HCT116 (cell line): ENCODE measurements at regions of chr6 and their contacts with region 1.

Region 1: GRCh38 chr6:117449549-117450439 is 24.1 kb upstream of the ROS1 start:
- DNase-seq: peak; percentile 56
- ATAC-seq: peak; percentile 53; the same call in 1 of the 2 replicates
- H3K4me3 ChIP-seq: peak overlapping the region; percentile 30 to 49
- H3K27ac ChIP-seq: no peak overlapping the region
- H3K4me1 ChIP-seq: peaks cover 9 to 14% of the 10 kb centered on the region in 2 experiments
- H3K27me3 ChIP-seq: peaks cover 25% of the 10 kb centered on the region; the same call in 1 of the 2 replicates
- CTCF ChIP-seq: peak; percentile 52 to 87 (median 85); a peak in 5 of 6 replicates
- POLR2A ChIP-seq: no peak
- RAD21 ChIP-seq: peak; percentile 88

Region 2: GRCh38 chr6:117346142-117346930 is 103.5 kb before region 1 on chr6:
- CTCF ChIA-PET with region 1: no interaction called
- POLR2A ChIA-PET with region 1: no interaction called
- RAD21 ChIA-PET with region 1: no interaction called
- intact Hi-C with region 1: loop called (anchors 2 kb)
- DNase-seq: no peak
- ATAC-seq: 0 out of 2 replicates have a peak, but pooled peaks have one; percentile 36
- H3K4me3 ChIP-seq: no peak overlapping the region
- H3K27ac ChIP-seq: no peak overlapping the region
- H3K4me1 ChIP-seq: no peaks in the 10 kb centered on the region
- H3K27me3 ChIP-seq: no peaks in the 10 kb centered on the region
- CTCF ChIP-seq: peak; percentile 27 to 57 (median 53); a peak in 4 of 6 replicates
- POLR2A ChIP-seq: no peak
- RAD21 ChIP-seq: peak; percentile 71

Region 3: GRCh38 chr6:117482240-117483003 is 32.6 kb after region 1 on chr6 and contains the start of gene DCBLD1:
- CTCF ChIA-PET with region 1: interaction called, 6 read pairs
- POLR2A ChIA-PET with region 1: no interaction called
- RAD21 ChIA-PET with region 1: no interaction called
- intact Hi-C with region 1: loop called (anchors 2 kb)
- DNase-seq: peak; percentile 78
- ATAC-seq: peak; percentile 83
- H3K4me3 ChIP-seq: peak within 1 kb of the TSS; percentile 86 to 88
- H3K27ac ChIP-seq: peak within 1 kb of the TSS; percentile 88
- H3K4me1 ChIP-seq: peaks cover 11 to 21% of the 10 kb centered on the region in 2 experiments; a peak in 3 of 4 replicates
- H3K27me3 ChIP-seq: no peaks in the 10 kb centered on the region
- CTCF ChIP-seq: no peak
- POLR2A ChIP-seq: peak; percentile 59
- RAD21 ChIP-seq: no peak
- total RNA-seq, gene DCBLD1: 19.5 TPM

Region 4: DNA sequence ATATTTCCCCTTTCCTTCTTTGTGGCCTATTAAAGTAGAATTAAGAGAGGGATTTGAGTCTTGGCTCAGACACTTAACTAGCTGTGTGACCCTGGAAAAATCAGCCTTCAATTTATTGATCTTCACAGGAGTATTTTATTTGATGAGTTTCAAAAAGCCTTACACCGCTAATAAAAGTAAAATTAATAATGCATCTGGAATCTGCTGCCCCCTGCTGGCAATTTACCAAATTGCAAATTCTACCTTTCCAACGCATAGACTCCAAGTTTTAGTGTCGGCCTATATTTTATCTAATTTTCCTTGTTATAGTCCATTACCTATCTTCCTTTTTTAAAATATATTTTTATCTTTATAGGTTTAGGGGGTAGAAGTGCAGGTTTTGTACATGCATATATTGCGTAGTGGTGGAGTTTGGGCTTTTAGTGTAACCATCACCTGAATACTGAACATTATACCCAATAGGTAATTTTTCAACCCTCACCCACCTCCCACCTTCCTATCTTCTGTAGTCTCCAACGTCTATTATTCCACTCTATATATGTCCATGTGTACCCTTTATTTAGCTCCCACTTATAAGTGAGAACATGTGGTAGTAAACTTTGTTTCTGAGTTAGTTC is 106.2 kb after region 1 on chr6:
- CTCF ChIA-PET with region 1: interaction called, 21 read pairs
- POLR2A ChIA-PET with region 1: no interaction called
- RAD21 ChIA-PET with region 1: interaction called, 3 to 4 read pairs
- intact Hi-C with region 1: loop called (anchors 1 kb)
- DNase-seq: no peak
- ATAC-seq: peak; percentile 58
- H3K4me3 ChIP-seq: no peak overlapping the region
- H3K27ac ChIP-seq: no peak overlapping the region
- H3K4me1 ChIP-seq: peaks cover under 1 to 7% of the 10 kb centered on the region in 2 experiments; a peak in 2 of 4 replicates
- H3K27me3 ChIP-seq: no peaks in the 10 kb centered on the region
- CTCF ChIP-seq: peak; percentile 61 to 87 (median 77); a peak in 5 of 6 replicates
- POLR2A ChIP-seq: no peak
- RAD21 ChIP-seq: peak; percentile 83

Region 5: GRCh38 chr6:117602151-117602898 is 152.5 kb after region 1 on chr6 and contains the start of gene GOPC:
- CTCF ChIA-PET with region 1: interaction called, 41 read pairs
- POLR2A ChIA-PET with region 1: interaction called, 4 read pairs
- RAD21 ChIA-PET with region 1: interaction called in 1 of 2 experiments, 5 read pairs
- intact Hi-C with region 1: loop called (anchors 1 kb)
- DNase-seq: peak; percentile 95
- ATAC-seq: peak; percentile 90
- H3K4me3 ChIP-seq: peak within 1 kb of the TSS; percentile 88 to 89
- H3K27ac ChIP-seq: peak within 1 kb of the TSS; percentile 86
- H3K4me1 ChIP-seq: peaks cover 9 to 18% of the 10 kb centered on the region in 2 experiments
- H3K27me3 ChIP-seq: no peaks in the 10 kb centered on the region
- CTCF ChIP-seq: 0 out of 6 replicates have a peak, but pooled peaks of 1 of the 3 experiments have one; percentile 12
- POLR2A ChIP-seq: peak; percentile 77
- RAD21 ChIP-seq: no peak
- total RNA-seq, gene GOPC: 24.2 TPM

Region 6: DNA sequence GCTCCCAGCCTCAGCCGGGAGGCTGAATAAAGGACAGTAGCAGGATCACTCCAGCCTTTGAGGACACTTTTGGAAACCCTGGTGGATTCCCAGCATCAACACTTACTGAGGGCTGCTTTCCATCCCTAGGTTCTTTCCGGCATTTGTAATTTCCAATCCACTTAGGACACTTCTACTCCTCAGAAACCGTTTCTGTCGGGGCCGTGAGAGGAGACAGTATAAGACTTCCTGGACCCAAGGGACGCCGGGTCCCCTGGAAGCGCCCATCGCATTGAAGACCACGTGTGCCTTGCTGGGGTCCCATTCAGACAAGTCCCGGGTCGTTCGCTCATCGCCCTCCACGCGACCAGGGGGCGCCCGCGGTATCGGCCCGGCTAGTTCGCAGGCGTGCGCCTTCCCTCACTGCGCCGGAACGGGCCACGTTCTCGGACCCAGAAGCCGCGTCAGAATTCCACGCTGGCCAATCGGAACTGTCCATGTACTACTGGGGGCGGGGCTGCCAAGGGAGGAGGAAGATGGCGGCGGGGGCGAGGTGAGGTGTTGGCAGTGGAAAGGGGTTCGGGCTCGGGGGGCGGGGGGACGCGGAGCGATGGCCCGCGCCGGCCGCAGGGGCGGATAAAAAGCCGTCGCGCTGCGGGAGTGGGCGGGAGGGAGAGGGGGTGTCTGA is 225.3 kb after region 1 on chr6 and contains the start of gene NUS1:
- CTCF ChIA-PET with region 1: no interaction called
- POLR2A ChIA-PET with region 1: no interaction called
- RAD21 ChIA-PET with region 1: no interaction called
- intact Hi-C with region 1: loop called (anchors 5 kb)
- DNase-seq: peak; percentile 94
- ATAC-seq: peak; percentile 98
- H3K4me3 ChIP-seq: peak within 1 kb of the TSS; percentile 71 to 75
- H3K27ac ChIP-seq: peak within 1 kb of the TSS; percentile 30; the same call in 1 of the 2 replicates
- H3K4me1 ChIP-seq: peaks cover 7 to 22% of the 10 kb centered on the region in 2 experiments; a peak in 3 of 4 replicates
- H3K27me3 ChIP-seq: no peaks in the 10 kb centered on the region
- CTCF ChIP-seq: peak; percentile 57 to 65 (median 57); a peak in 5 of 6 replicates
- POLR2A ChIP-seq: no peak
- RAD21 ChIP-seq: no peak
- total RNA-seq, gene NUS1: 46.2 TPM

Region 7: DNA sequence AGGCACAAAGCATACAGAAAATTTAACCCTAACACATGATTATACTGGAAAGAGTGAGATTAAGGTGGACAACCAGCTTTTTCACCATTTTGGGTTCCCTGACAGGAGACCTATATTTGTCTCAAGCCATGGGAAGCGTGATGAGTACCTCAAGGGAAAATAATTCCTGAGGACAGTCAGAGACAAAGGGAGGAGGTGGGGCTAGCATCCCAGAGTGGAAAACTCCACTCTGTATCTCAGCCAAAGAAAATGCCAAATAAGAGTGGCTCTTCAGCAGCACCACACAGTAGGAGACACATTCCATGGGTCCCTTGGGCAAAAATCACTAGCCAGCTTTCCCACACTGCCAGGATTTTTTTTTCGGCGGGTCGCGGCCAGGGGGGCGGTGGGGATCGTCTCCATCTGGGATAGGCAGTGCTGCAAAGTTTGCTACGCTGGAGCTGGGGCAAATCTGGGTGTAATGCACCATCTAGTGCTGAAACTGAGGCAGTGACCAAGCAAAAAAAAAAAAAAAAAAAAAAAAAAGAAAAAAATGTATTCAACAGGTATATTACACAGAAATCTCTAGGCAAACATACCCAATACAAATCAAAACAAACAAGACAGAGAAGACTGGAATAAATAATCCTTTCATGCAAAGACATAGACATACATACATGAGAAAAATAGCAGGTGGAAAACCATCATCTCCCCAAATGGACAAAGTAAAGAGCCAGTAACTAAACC is 380.0 kb after region 1 on chr6:
- CTCF ChIA-PET with region 1: interaction called, 12 read pairs
- POLR2A ChIA-PET with region 1: interaction called, 3 read pairs
- RAD21 ChIA-PET with region 1: no interaction called
- intact Hi-C with region 1: loop called (anchors 2 kb)
- DNase-seq: peak; percentile 51
- ATAC-seq: peak; percentile 98
- H3K4me3 ChIP-seq: peak overlapping the region; percentile 39 to 43
- H3K27ac ChIP-seq: 0 out of 2 replicates have a peak overlapping the region, but pooled peaks have one; percentile 6
- H3K4me1 ChIP-seq: peaks cover 3 to 4% of the 10 kb centered on the region in 2 experiments; a peak in 2 of 4 replicates
- H3K27me3 ChIP-seq: no peaks in the 10 kb centered on the region
- CTCF ChIP-seq: peak; percentile 54 to 66 (median 56)
- POLR2A ChIP-seq: no peak
- RAD21 ChIP-seq: peak; percentile 80